ENCODE measurements at regions of chr9 and their contacts with region 1.

Region 1: GRCh38 chr9:121376214-121376830 is 6.3 kb upstream of the STOM start:
- DNase-seq: no peak
- H3K4me3 ChIP-seq: no peak overlapping the region
- H3K27ac ChIP-seq: peak overlapping the region in 2 of 4 donors; percentile 96 to 99
- H3K4me1 ChIP-seq: peaks cover 0 to 49% (median 31%) of the 10 kb centered on the region in 4 donors
- H3K27me3 ChIP-seq: no peaks in the 10 kb centered on the region
- CTCF ChIP-seq: peak in 3 of 4 experiments; percentile 31 to 56 (median 40)
- EP300 ChIP-seq: no peak
- POLR2A ChIP-seq: no peak

Region 2: GRCh38 chr9:121317742-121318489 is 58.4 kb before region 1 on chr9:
- intact Hi-C with region 1: loop called (anchors 1 kb)
- DNase-seq: no peak
- H3K4me3 ChIP-seq: no peak overlapping the region
- H3K27ac ChIP-seq: peak overlapping the region; percentile 91 to 99 (median 94)
- H3K4me1 ChIP-seq: peaks cover 0 to 78% (median 64%) of the 10 kb centered on the region in 4 donors
- H3K27me3 ChIP-seq: no peaks in the 10 kb centered on the region
- CTCF ChIP-seq: no peak
- EP300 ChIP-seq: no peak
- POLR2A ChIP-seq: no peak